ENCODE measurements at regions of chr19 and their contacts with region 1.

Region 1: DNA sequence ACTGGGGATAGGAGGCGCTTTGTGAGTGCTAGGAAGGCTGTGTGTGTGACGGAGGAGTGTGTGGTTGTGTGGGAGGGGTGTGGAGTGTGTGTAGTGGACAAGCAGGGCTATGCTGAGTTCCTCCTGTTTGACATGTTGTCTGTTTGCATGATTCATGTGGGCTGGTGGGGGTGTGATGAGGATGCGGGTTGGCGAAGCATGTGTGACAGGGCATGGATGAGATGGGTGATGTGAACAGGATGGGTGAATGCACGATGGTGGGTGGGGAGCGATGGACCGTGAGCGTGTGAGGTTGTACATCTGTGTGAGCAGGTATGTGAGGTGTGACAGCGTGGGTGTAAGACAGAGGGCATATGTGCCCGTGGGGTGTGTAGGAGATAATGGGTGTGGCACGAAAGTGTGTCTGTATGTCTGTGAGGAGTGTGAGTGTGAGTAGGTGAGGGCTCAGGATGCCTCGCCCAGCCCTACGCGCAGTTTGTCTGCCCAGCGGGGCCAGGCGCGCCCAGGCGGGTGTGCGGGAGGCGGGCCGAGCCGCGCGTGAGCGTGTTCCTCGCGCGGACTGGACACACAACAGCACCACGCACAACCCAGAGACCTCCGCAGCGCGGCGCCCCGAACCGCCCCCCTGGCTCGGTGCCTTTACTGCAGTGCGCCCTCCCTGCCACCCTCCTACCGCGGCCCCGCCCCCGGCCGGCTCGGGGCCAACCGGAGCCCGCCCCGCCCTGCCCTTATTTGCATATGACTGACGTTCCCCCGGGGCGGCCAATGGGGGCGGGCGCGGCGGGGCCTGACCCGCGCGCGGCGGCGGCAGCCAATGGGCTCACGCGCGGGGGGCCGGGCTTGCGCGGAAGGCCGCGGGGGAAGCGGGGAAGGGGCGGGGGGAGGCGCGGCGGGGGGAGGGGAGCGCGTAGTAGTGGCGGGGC is 14.4 kb downstream of the CIC start:
- DNase-seq: peak; percentile 69
- ATAC-seq: peak; percentile 66
- H3K4me3 ChIP-seq: peak overlapping the region; percentile 61
- H3K27ac ChIP-seq: peak overlapping the region; percentile 78
- H3K4me1 ChIP-seq: peaks cover 50% of the 10 kb centered on the region
- H3K27me3 ChIP-seq: no peaks in the 10 kb centered on the region
- CTCF ChIP-seq: peak in 1 of 3 experiments; percentile 22; a peak in 1 of 6 replicates
- EP300 ChIP-seq: no peak
- POLR2A ChIP-seq: peak; percentile 68
- RAD21 ChIP-seq: no peak

Region 2: DNA sequence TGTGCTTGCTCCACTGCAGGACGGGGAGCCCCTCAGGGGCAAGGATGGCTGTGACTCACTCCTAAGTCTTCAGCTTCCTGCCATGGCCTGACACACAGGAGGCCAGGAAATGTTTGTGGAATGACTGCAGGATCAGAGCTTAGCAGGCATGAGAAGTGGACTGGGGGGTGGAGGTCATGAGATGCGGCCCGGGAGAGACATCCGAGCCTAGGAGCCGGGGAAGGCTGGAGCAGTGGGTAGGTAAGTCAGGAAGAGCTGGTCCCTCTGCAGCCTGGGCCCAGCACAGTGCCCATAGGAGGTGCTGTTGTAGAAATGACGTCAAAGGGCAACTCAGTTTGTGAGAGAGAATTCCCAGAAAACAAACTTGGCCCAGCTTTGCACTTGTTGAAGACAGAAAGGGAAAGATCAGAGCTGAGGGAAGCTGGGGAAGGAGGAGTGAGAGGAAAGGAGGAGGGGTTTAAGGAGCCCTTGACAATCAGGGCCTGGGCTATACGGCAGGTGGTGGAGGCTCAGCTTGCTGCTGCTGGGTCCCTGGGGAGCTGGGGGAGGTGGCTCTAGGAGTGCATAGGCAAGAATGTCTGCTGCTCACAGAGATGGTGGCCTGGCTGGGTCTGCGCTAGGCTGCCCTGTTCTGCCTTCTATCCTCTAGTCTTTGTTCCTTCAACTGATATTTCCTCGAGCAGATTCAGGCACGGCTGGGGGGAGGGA is 169.6 kb before region 1 on chr19:
- CTCF ChIA-PET with region 1: interaction called, 18 read pairs
- POLR2A ChIA-PET with region 1: interaction called, 3 read pairs
- RAD21 ChIA-PET with region 1: interaction called, 8 read pairs
- SMC1A ChIA-PET with region 1: interaction called, 9 read pairs
- in situ Hi-C with region 1: no loop called
- intact Hi-C with region 1: loop called (anchors 5 kb)
- DNase-seq: peak; percentile 40
- ATAC-seq: peak; percentile 90
- H3K4me3 ChIP-seq: 0 out of 2 replicates have a peak overlapping the region, but pooled peaks have one; percentile 2
- H3K27ac ChIP-seq: peak overlapping the region; percentile 88
- H3K4me1 ChIP-seq: peaks cover 53% of the 10 kb centered on the region
- H3K27me3 ChIP-seq: no peaks in the 10 kb centered on the region
- CTCF ChIP-seq: peak in 2 of 3 experiments; percentile 8 to 18; a peak in 1 of 6 replicates
- EP300 ChIP-seq: no peak
- POLR2A ChIP-seq: 0 out of 2 replicates have a peak, but pooled peaks have one; percentile 21
- RAD21 ChIP-seq: no peak

Region 3: DNA sequence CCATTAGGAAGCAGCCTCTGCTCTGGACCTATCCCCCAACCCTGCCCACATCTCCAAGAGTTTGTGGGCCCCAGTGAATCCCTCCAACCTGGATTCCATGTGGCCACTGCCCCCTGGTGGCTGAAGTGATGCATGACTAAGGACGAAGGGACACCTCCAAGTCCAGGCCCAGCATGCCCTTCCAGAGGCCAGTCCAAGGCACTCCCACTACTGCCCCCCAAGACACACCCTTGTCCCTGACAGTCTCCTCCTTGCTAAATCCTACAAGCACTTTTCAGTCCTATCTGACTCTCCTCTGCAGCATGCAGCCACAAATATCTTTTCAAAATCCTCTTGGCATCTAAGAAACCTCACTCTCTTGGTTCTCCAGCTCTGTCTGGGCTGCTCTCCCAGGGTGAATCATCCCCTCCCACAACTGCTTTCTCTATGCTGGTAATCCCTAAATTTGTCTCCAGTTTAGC is 99.0 kb before region 1 on chr19:
- CTCF ChIA-PET with region 1: interaction called, 11 read pairs
- POLR2A ChIA-PET with region 1: no interaction called
- RAD21 ChIA-PET with region 1: no interaction called
- SMC1A ChIA-PET with region 1: interaction called, 3 read pairs
- in situ Hi-C with region 1: no loop called
- intact Hi-C with region 1: no loop called
- DNase-seq: no peak
- ATAC-seq: peak; percentile 97
- H3K4me3 ChIP-seq: no peak overlapping the region
- H3K27ac ChIP-seq: no peak overlapping the region
- H3K4me1 ChIP-seq: peaks cover 11% of the 10 kb centered on the region
- H3K27me3 ChIP-seq: no peaks in the 10 kb centered on the region; a peak in 1 of 4 replicates
- CTCF ChIP-seq: peak; percentile 83 to 93 (median 86)
- EP300 ChIP-seq: no peak
- POLR2A ChIP-seq: no peak
- RAD21 ChIP-seq: peak; percentile 88

Region 4: GRCh38 chr19:42219812-42220750 is 63.3 kb before region 1 on chr19 and contains the start of gene ZNF526:
- CTCF ChIA-PET with region 1: interaction called, 8 read pairs
- POLR2A ChIA-PET with region 1: interaction called, 3 read pairs
- RAD21 ChIA-PET with region 1: interaction called, 6 read pairs
- SMC1A ChIA-PET with region 1: interaction called, 3 read pairs
- in situ Hi-C with region 1: no loop called
- intact Hi-C with region 1: loop called (anchors 2 kb)
- DNase-seq: peak; percentile 95
- ATAC-seq: peak; percentile 93
- H3K4me3 ChIP-seq: peak within 1 kb of the TSS; percentile 97
- H3K27ac ChIP-seq: peak within 1 kb of the TSS; percentile 83
- H3K4me1 ChIP-seq: peaks cover 18% of the 10 kb centered on the region
- H3K27me3 ChIP-seq: no peaks in the 10 kb centered on the region
- CTCF ChIP-seq: no peak
- EP300 ChIP-seq: no peak
- POLR2A ChIP-seq: peak; percentile 91
- RAD21 ChIP-seq: no peak
- polyA plus RNA-seq, gene ZNF526: 1.8 to 2.0 TPM

Region 5: GRCh38 chr19:42268704-42269477 is 14.5 kb before region 1 on chr19 and contains the start of gene CIC:
- CTCF ChIA-PET with region 1: interaction called, 39 read pairs
- POLR2A ChIA-PET with region 1: interaction called, 24 read pairs
- RAD21 ChIA-PET with region 1: interaction called, 23 read pairs
- SMC1A ChIA-PET with region 1: interaction called, 24 read pairs
- in situ Hi-C with region 1: no loop called
- intact Hi-C with region 1: loop called (anchors 2 kb)
- DNase-seq: peak; percentile 100
- ATAC-seq: peak; percentile 90
- H3K4me3 ChIP-seq: peak within 1 kb of the TSS; percentile 91
- H3K27ac ChIP-seq: peak within 1 kb of the TSS; percentile 100
- H3K4me1 ChIP-seq: peaks cover 15% of the 10 kb centered on the region
- H3K27me3 ChIP-seq: no peaks in the 10 kb centered on the region
- CTCF ChIP-seq: no peak
- EP300 ChIP-seq: no peak
- POLR2A ChIP-seq: peak; percentile 50; the same call in 1 of the 2 replicates
- RAD21 ChIP-seq: no peak
- polyA plus RNA-seq, gene CIC: 0.18 to 0.24 TPM

Region 6: DNA sequence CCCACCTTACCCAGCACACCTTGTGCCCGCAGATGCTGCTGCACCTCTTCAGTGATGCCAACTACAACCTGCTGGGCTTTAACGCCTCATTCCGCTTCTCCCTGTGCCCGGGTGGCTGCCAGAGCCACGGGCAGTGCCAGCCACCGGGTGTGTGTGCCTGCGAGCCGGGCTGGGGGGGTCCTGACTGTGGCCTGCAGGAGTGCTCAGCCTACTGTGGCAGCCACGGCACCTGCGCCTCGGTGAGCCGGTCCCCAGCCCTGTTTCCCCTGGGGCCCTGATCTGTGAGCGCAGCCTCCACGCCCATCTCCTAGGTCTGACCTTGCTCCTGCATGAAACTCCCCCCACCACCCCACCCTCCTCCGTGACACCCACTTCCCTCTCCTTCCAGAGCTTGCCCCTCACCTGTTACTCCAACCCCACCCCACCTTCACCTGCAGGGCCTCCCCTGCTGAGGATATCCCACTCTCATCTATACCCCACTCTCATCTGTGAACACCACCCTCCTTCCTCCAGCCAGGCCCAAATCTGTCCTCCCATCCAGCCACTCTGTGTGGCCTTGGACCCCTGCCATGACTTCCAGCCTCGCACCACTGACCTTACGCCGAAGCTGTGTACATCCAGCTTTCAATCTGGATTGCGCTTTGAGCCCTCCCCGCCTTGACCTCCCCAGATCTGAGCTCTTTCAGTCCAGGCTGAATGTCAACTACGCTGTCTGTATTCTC is 50.7 kb after region 1 on chr19:
- CTCF ChIA-PET with region 1: no interaction called
- POLR2A ChIA-PET with region 1: no interaction called
- RAD21 ChIA-PET with region 1: no interaction called
- SMC1A ChIA-PET with region 1: no interaction called
- in situ Hi-C with region 1: no loop called
- intact Hi-C with region 1: no loop called
- DNase-seq: no peak
- ATAC-seq: no peak
- H3K4me3 ChIP-seq: no peak overlapping the region
- H3K27ac ChIP-seq: no peak overlapping the region
- H3K4me1 ChIP-seq: no peaks in the 10 kb centered on the region; the same call in 1 of the 2 replicates
- H3K27me3 ChIP-seq: no peaks in the 10 kb centered on the region
- CTCF ChIP-seq: no peak
- EP300 ChIP-seq: no peak
- POLR2A ChIP-seq: no peak
- RAD21 ChIP-seq: no peak

Region 7: GRCh38 chr19:42386974-42387707 is 103.7 kb after region 1 on chr19:
- CTCF ChIA-PET with region 1: no interaction called
- POLR2A ChIA-PET with region 1: no interaction called
- RAD21 ChIA-PET with region 1: no interaction called
- SMC1A ChIA-PET with region 1: no interaction called
- in situ Hi-C with region 1: no loop called
- intact Hi-C with region 1: no loop called
- DNase-seq: no peak
- ATAC-seq: peak; percentile 95
- H3K4me3 ChIP-seq: peak overlapping the region; percentile 49; the same call in 1 of the 2 replicates
- H3K27ac ChIP-seq: no peak overlapping the region
- H3K4me1 ChIP-seq: no peaks in the 10 kb centered on the region
- H3K27me3 ChIP-seq: peaks cover 0 to 2% of the 10 kb centered on the region in 2 experiments; a peak in 2 of 4 replicates
- CTCF ChIP-seq: peak; percentile 28 to 65 (median 51); a peak in 5 of 6 replicates
- EP300 ChIP-seq: no peak
- POLR2A ChIP-seq: peak; percentile 53; the same call in 1 of the 2 replicates
- RAD21 ChIP-seq: no peak